Calu3 (cell line): ENCODE measurements at regions of chr7 and their contacts with region 1.

Region 1: DNA sequence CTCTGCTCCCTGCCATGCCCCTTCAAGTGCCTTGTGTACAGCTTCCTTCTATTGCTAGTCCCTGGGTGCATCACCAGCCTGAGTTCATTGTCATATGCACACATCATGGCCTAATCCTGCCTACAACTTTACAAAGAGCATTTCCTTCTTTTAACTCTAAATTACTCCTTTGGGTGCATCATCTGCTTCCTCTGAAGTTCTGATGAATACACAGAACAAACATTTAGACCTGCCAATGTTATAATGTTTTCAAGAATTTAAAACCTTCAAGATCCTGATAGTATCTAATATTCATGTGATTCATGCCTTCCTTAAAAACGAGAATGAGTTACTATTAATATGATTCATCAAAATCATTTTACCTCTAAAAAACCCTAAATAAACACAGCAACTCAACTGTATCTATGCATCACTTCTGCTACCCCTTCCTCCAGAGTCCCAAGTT is 357.1 kb downstream of the MAGI2 start:
- DNase-seq: no peak
- H3K4me3 Mint-ChIP-seq: no peak overlapping the region
- H3K27ac Mint-ChIP-seq: no peak overlapping the region
- H3K4me1 Mint-ChIP-seq: no peaks in the 10 kb centered on the region
- H3K27me3 Mint-ChIP-seq: no peaks in the 10 kb centered on the region
- CTCF ChIP-seq: no peak

Region 2: DNA sequence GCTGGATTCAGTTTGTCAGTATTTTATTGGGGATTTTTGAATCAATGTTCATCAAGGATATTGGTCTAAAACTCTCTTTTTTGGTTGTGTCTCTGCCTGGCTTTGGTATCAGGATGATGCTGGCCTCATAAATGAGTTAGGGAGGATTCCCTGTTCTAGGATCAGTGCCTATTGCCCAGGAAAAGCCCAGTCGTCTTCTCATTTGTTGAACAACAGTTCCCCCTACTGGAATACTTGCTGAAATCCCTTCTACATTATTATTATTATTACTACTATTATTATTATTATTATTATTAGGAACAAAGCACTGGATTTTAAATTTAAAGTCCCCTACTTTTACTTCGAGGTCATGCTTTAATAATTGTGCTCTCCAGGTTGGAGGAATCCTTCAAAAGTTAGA is 171.8 kb before region 1 on chr7:
- CTCF ChIA-PET with region 1: no interaction called
- intact Hi-C with region 1: no loop called
- DNase-seq: peak; percentile 1
- H3K4me3 Mint-ChIP-seq: no peak overlapping the region
- H3K27ac Mint-ChIP-seq: no peak overlapping the region
- H3K4me1 Mint-ChIP-seq: no peaks in the 10 kb centered on the region
- H3K27me3 Mint-ChIP-seq: no peaks in the 10 kb centered on the region
- CTCF ChIP-seq: no peak

Region 3: GRCh38 chr7:79050603-79051002 is 45.8 kb before region 1 on chr7:
- CTCF ChIA-PET with region 1: no interaction called
- intact Hi-C with region 1: loop called (anchors 10 kb)
- DNase-seq: no peak
- H3K4me3 Mint-ChIP-seq: no peak overlapping the region
- H3K27ac Mint-ChIP-seq: no peak overlapping the region
- H3K4me1 Mint-ChIP-seq: peaks cover 7% of the 10 kb centered on the region
- H3K27me3 Mint-ChIP-seq: no peaks in the 10 kb centered on the region
- CTCF ChIP-seq: no peak

Region 4: GRCh38 chr7:79149866-79150265 is 53.5 kb after region 1 on chr7:
- CTCF ChIA-PET with region 1: no interaction called
- intact Hi-C with region 1: no loop called
- DNase-seq: no peak
- H3K4me3 Mint-ChIP-seq: no peak overlapping the region
- H3K27ac Mint-ChIP-seq: no peak overlapping the region
- H3K4me1 Mint-ChIP-seq: no peaks in the 10 kb centered on the region
- H3K27me3 Mint-ChIP-seq: no peaks in the 10 kb centered on the region
- CTCF ChIP-seq: no peak

Region 5: GRCh38 chr7:79298145-79298760 is 201.9 kb after region 1 on chr7:
- CTCF ChIA-PET with region 1: no interaction called
- intact Hi-C with region 1: no loop called
- DNase-seq: peak; percentile 24
- H3K4me3 Mint-ChIP-seq: no peak overlapping the region
- H3K27ac Mint-ChIP-seq: no peak overlapping the region
- H3K4me1 Mint-ChIP-seq: peaks cover 13% of the 10 kb centered on the region
- H3K27me3 Mint-ChIP-seq: no peaks in the 10 kb centered on the region
- CTCF ChIP-seq: no peak